A549 (cell line): ENCODE measurements at regions of chr6 and their contacts with region 1.

Region 1: DNA sequence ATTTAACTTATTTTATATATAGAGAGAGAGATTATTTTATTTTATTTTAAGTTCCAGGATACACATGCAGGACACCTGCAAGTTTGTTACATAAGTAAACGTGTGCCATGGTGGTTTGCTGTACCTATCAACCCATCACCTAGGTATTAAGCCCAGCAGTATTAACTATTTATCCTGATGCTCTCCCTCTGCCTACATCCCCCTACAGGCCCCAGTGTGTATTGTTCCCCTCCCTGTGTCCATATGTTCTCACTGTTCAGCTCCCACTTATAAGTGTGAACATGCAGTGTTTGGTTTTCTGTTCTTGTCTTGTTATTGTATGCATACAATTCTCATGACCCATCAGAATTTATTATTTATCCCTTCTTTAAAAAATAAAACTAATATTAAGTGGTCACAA is 34.6 kb downstream of the FKBP1C start:
- DNase-seq: peak in 1 of 2 experiments; percentile 16
- ATAC-seq: peak in 1 of 2 experiments; percentile 87; a peak in 3 of 6 replicates
- H3K4me3 ChIP-seq: no peak overlapping the region
- H3K27ac ChIP-seq: no peak overlapping the region
- H3K4me1 ChIP-seq: no peaks in the 10 kb centered on the region
- CTCF ChIP-seq: no peak
- EP300 ChIP-seq: no peak
- POLR2A ChIP-seq: no peak
- RAD21 ChIP-seq: no peak

Region 2: DNA sequence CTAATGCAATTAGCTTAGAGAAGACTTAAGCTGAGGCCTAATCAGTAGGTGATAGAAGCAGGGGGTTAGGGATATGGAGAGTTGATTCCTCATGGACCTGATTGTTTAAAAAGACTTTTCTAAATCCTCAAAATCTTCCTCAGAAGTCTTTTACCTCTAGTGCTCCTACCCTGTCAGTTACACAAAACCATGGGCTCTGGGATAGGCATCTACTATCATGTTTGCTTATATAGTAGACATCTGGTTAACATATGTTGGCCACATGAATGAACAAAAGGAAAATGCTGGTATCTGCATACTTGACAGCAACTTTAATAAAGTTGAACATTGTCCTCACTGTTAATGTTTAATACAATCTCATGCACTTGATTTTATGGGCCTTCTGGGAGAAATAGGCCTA is 96.2 kb before region 1 on chr6:
- CTCF ChIA-PET with region 1: no interaction called
- POLR2A ChIA-PET with region 1: interaction called, 10 read pairs
- DNase-seq: no peak
- ATAC-seq: no peak
- H3K4me3 ChIP-seq: no peak overlapping the region
- H3K27ac ChIP-seq: no peak overlapping the region
- H3K4me1 ChIP-seq: no peaks in the 10 kb centered on the region
- CTCF ChIP-seq: no peak
- EP300 ChIP-seq: no peak
- POLR2A ChIP-seq: no peak
- RAD21 ChIP-seq: no peak

Region 3: DNA sequence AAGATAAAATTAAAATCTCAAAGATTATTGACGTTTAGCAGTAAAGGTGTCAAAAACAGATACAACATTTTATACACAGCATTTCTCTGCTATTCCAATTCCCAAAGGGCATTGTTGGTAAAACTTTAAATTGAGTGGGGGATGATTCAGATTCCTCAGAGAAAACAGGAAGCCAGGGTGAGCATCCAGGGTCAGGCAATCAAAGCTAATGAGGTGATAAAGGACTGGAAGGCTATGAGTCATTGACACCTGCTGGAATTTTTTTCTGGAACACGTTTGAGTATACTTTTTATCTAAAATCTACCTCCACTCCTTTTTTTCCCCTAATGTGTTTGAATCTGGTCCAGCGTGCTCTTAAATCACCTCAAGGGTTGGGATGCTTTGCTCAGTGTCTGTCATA is 17.5 kb after region 1 on chr6:
- CTCF ChIA-PET with region 1: no interaction called
- POLR2A ChIA-PET with region 1: no interaction called
- DNase-seq: no peak
- ATAC-seq: no peak
- H3K4me3 ChIP-seq: no peak overlapping the region
- H3K27ac ChIP-seq: no peak overlapping the region
- H3K4me1 ChIP-seq: no peaks in the 10 kb centered on the region
- CTCF ChIP-seq: no peak
- EP300 ChIP-seq: no peak
- POLR2A ChIP-seq: no peak
- RAD21 ChIP-seq: no peak

Region 4: GRCh38 chr6:63307581-63308246 is 61.8 kb after region 1 on chr6:
- CTCF ChIA-PET with region 1: no interaction called
- POLR2A ChIA-PET with region 1: no interaction called
- DNase-seq: peak; percentile 39 to 62
- ATAC-seq: peak; percentile 95 to 96
- H3K4me3 ChIP-seq: no peak overlapping the region
- H3K27ac ChIP-seq: no peak overlapping the region
- H3K4me1 ChIP-seq: peaks cover 19% of the 10 kb centered on the region
- CTCF ChIP-seq: peak; percentile 53
- EP300 ChIP-seq: no peak
- POLR2A ChIP-seq: no peak
- RAD21 ChIP-seq: peak; percentile 63 to 69